Sigmoid colon (tissue), 7 donors: ENCODE measurements at regions of chr1 and their contacts with region 1.

Region 1: GRCh38 chr1:153677718-153678505 is 576 bp upstream of the NPR1 start:
- DNase-seq: no peak
- H3K4me3 ChIP-seq: peak overlapping the region; percentile 37 to 57 (median 49)
- H3K27ac ChIP-seq: peak overlapping the region; percentile 22 to 76 (median 49)
- H3K4me1 ChIP-seq: peaks cover 0 to 29% (median 26%) of the 10 kb centered on the region in 4 donors
- H3K27me3 ChIP-seq: peaks cover 0 to 57% (median 30%) of the 10 kb centered on the region in 3 donors
- CTCF ChIP-seq: peak; percentile 80 to 94 (median 83)
- EP300 ChIP-seq: no peak
- POLR2A ChIP-seq: no peak

Region 2: DNA sequence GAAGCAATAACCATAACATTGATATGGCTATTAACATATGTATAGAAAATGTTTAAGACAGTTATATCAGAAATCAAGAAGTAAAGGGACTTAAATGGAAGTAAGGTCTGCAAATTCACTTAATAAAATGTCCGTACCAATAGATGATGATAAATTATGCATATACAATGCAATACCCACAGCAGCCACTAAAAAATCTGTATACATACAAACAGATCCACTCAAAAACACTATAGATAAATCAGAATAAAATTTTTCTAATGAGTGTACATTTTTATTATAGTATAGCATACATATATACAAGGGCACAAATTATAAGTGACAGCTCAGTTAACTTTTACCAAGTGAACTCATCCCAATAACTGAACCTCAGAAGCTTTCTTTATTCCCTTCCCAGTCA is 412.5 kb before region 1 on chr1:
- intact Hi-C with region 1: no loop called
- DNase-seq: no peak
- H3K4me3 ChIP-seq: no peak overlapping the region
- H3K27ac ChIP-seq: no peak overlapping the region
- H3K4me1 ChIP-seq: peaks cover 0 to 21% (median 16%) of the 10 kb centered on the region in 4 donors
- H3K27me3 ChIP-seq: peaks cover 20 to 74% (median 36%) of the 10 kb centered on the region in 3 donors
- CTCF ChIP-seq: no peak
- EP300 ChIP-seq: no peak
- POLR2A ChIP-seq: no peak

Region 3: GRCh38 chr1:153749408-153750005 is 71.6 kb after region 1 on chr1:
- intact Hi-C with region 1: loop called (anchors 1 kb)
- DNase-seq: peak; percentile 95
- H3K4me3 ChIP-seq: no peak overlapping the region
- H3K27ac ChIP-seq: peak overlapping the region; percentile 45 to 68 (median 52)
- H3K4me1 ChIP-seq: peaks cover 0 to 60% (median 11%) of the 10 kb centered on the region in 4 donors
- H3K27me3 ChIP-seq: no peaks in the 10 kb centered on the region
- CTCF ChIP-seq: peak; percentile 82 to 90 (median 88)
- EP300 ChIP-seq: no peak
- POLR2A ChIP-seq: no peak

Region 4: DNA sequence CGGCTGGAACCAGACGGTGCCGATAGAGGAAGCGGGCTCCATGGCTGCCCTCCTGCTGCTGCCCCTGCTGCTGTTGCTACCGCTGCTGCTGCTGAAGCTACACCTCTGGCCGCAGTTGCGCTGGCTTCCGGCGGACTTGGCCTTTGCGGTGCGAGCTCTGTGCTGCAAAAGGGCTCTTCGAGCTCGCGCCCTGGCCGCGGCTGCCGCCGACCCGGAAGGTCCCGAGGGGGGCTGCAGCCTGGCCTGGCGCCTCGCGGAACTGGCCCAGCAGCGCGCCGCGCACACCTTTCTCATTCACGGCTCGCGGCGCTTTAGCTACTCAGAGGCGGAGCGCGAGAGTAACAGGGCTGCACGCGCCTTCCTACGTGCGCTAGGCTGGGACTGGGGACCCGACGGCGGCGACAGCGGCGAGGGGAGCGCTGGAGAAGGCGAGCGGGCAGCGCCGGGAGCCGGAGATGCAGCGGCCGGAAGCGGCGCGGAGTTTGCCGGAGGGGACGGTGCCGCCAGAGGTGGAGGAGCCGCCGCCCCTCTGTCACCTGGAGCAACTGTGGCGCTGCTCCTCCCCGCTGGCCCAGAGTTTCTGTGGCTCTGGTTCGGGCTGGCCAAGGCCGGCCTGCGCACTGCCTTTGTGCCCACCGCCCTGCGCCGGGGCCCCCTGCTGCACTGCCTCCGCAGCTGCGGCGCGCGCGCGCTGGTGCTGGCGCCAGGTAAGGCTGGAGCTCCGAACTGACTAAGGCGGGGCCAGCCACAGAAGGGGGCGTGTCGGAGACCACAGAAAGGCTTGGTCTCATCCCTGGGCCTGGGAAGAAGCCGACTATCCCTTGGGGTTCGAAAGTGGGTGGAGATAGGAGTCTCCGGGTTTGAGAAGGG is 97.8 kb after region 1 on chr1:
- intact Hi-C with region 1: loop called (anchors 2 kb)
- DNase-seq: peak; percentile 90
- H3K4me3 ChIP-seq: peak overlapping the region; percentile 60 to 89 (median 71)
- H3K27ac ChIP-seq: peak overlapping the region; percentile 88 to 93 (median 92)
- H3K4me1 ChIP-seq: peaks cover 0 to 52% (median 41%) of the 10 kb centered on the region in 4 donors
- H3K27me3 ChIP-seq: no peaks in the 10 kb centered on the region
- CTCF ChIP-seq: no peak
- EP300 ChIP-seq: no peak
- POLR2A ChIP-seq: peak; percentile 17 to 24

Region 5: DNA sequence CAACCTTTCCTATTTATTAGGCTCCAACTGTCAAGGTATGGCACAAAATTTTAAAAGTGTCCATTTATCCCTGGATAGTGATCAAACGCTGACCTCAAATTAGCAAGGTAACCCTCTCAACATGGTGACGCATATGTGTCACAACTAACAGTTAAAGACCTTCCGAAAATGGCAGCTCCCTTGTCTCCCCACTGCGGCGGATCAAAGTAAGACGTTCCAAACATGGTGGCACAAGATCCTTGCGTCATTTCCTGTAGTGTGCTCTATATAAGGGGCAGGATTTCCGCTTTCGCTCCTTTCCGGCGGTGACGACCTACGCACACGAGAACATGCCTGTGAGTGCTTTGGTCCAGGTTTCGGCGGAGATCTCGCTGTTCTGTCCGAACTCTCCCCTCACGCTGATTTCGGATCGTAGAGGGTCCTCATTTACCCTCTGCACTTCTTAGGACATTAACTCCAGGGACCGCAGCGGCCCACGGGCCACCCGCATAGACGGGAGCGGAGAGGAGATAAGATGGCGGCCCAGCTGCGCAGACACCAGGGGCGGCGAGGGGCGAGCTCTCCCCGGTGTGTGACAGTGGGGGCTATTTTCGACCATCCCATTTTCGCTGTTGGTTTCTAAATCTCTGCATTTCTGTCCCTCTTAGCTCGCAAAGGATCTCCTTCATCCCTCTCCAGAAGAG is 312.7 kb after region 1 on chr1 and contains the start of gene RPS27:
- intact Hi-C with region 1: loop called (anchors 2 kb)
- DNase-seq: peak; percentile 98
- H3K4me3 ChIP-seq: peak within 1 kb of the TSS; percentile 72 to 96 (median 80)
- H3K27ac ChIP-seq: peak within 1 kb of the TSS; percentile 90 to 95 (median 92)
- H3K4me1 ChIP-seq: peaks cover 0 to 45% (median 40%) of the 10 kb centered on the region in 4 donors
- H3K27me3 ChIP-seq: no peaks in the 10 kb centered on the region
- CTCF ChIP-seq: no peak
- EP300 ChIP-seq: peak in 2 of 4 donors; percentile 63 to 75
- POLR2A ChIP-seq: peak; percentile 99 to 100
- total RNA-seq, gene RPS27: 1,466 to 4,347 (median 3,611) TPM